ENCODE measurements at regions of chr13 and their contacts with region 1.

Region 1: GRCh38 chr13:60627071-60627686 is 230.2 kb downstream of the TDRD3 start:
- DNase-seq: peak; percentile 29
- ATAC-seq: peak; percentile 98
- H3K4me3 ChIP-seq: no peak overlapping the region
- H3K27ac ChIP-seq: no peak overlapping the region
- H3K4me1 ChIP-seq: no peaks in the 10 kb centered on the region
- H3K27me3 ChIP-seq: no peaks in the 10 kb centered on the region; a peak in 1 of 5 replicates
- CTCF ChIP-seq: peak; percentile 76
- EP300 ChIP-seq: no peak
- POLR2A ChIP-seq: no peak
- RAD21 ChIP-seq: peak; percentile 58

Region 2: DNA sequence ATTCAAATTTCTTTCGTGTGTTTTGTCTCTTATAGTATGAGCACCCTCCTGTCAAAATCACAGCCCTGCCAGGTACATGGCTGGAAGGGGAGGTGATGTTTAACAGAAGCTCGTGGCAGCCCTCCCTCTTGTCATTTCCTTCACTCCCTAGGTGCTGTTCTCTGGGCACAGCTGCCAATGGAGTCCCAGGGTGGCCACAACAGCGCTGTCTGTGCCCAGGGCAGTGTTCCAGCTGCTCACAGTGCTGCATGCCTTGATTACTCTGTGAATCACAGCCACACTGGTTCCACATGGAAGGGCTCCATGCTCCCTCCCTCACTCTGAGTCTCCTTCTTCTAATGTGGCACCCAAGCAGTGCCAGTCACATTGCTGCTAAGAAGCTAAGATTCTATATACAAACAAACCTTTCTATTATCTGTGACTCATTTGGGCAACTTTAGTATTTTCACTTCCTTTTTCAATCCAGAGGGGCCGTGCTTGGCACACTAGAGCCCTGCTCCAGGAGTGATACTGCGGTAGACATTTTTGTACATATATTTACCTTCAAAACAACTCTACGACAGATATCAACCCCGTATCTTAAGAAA is 18.5 kb after region 1 on chr13:
- CTCF ChIA-PET with region 1: no interaction called
- POLR2A ChIA-PET with region 1: no interaction called
- in situ Hi-C with region 1: no loop called
- intact Hi-C with region 1: no loop called
- DNase-seq: no peak
- ATAC-seq: no peak
- H3K4me3 ChIP-seq: no peak overlapping the region
- H3K27ac ChIP-seq: no peak overlapping the region
- H3K4me1 ChIP-seq: no peaks in the 10 kb centered on the region
- H3K27me3 ChIP-seq: no peaks in the 10 kb centered on the region; a peak in 1 of 5 replicates
- CTCF ChIP-seq: no peak
- EP300 ChIP-seq: no peak
- POLR2A ChIP-seq: no peak
- RAD21 ChIP-seq: no peak

Region 3: DNA sequence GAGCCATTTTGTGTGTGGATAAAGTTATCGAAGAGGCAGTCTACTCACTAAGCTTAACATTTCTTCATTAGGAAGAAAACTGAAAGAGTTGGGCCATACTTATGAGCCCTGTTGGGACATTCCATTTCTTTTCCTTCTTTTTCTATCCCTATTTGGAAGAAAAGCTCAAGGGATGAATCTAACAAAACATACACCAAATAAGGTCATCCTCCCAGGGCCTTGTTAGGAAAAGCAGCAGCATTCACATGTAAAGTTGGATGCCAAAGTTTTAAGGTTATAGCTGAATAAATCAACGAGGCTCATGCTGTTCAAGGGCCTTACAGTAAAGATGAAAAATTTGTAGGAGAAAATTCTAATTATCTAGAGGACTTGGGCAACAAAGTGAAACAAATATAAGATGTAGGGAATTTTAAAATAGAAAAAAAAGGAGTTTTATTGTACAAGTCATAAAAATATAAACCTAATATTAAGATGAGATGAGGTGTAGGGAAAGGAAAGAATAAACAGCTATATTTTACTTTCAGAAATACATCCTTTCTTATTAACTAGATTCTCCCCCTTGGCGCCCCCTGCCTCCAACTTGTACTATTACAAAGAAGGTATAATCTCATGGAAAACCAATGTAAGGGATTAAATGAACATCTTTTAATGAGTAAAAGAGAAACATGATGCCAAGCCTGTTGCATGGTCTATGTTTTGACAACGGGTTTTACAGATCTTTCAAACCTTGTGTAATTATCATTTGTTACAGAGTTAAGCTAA is 628.0 kb after region 1 on chr13:
- CTCF ChIA-PET with region 1: interaction called, 3 read pairs
- POLR2A ChIA-PET with region 1: no interaction called
- in situ Hi-C with region 1: loop called (anchors 10 kb)
- intact Hi-C with region 1: loop called (anchors 10 kb)
- DNase-seq: peak; percentile 3
- ATAC-seq: no peak
- H3K4me3 ChIP-seq: no peak overlapping the region
- H3K27ac ChIP-seq: no peak overlapping the region
- H3K4me1 ChIP-seq: no peaks in the 10 kb centered on the region
- H3K27me3 ChIP-seq: no peaks in the 10 kb centered on the region; a peak in 1 of 5 replicates
- CTCF ChIP-seq: 0 out of 2 replicates have a peak, but pooled peaks have one; percentile 10
- EP300 ChIP-seq: no peak
- POLR2A ChIP-seq: no peak
- RAD21 ChIP-seq: no peak